Heart left ventricle (tissue), 16 donors: ENCODE measurements at regions of chr11 and their contacts with region 1.

Region 1: DNA sequence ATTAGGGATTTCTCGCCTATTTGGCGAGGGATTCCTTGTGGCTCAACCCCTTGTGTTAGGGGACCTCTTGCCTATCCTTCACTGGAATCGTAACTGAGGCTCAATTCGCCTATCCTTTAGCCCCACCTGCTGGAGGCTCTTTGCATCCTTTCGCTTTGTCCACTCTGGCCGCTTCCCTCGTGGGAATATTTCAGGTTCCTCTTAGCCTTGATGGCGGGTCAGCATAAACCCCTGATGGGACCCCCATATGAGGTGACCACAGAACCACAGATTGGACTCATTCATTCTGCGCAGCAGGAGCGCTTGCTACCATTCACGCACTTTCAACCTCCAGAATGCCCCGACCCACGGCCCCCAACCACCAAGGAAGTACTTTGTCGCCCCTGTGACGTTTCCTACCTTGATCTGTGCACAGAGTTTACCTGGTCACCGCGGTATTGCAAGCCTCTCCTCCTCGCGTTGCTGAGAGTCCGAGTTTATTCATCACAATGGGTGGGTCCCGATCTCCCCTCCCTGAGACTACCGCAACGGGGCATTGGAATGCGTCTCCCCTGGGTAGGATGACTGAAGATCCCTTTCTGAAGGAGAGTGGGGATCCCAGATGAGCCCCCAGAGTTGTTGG is at the start of gene OR52N2:
- DNase-seq: peak in 4 of 5 donors; percentile 63 to 70 (median 66)
- ATAC-seq: peak in 3 of 4 donors; percentile 88 to 92 (median 90)
- H3K4me3 ChIP-seq: peak within 1 kb of the TSS; percentile 17 to 66 (median 54)
- H3K27ac ChIP-seq: no peak within 1 kb of the TSS
- H3K4me1 ChIP-seq: peaks cover 0 to 12% (median 0%) of the 10 kb centered on the region in 12 donors
- H3K27me3 ChIP-seq: peaks cover 0 to 2% (median 0%) of the 10 kb centered on the region in 9 donors
- CTCF ChIP-seq: peak; percentile 66 to 89 (median 84)
- POLR2A ChIP-seq: no peak
- total RNA-seq, gene OR52N2: not detected

Region 2: GRCh38 chr11:4636962-4637661 is 1171.5 kb before region 1 on chr11 and contains the start of gene OR51D1:
- intact Hi-C with region 1: loop called in 1 of 10 experiments (anchors 10 kb)
- DNase-seq: peak; percentile 70 to 84 (median 75)
- ATAC-seq: peak; percentile 88 to 98 (median 94)
- H3K4me3 ChIP-seq: peak within 1 kb of the TSS in 10 of 12 donors; percentile 28 to 52 (median 38)
- H3K27ac ChIP-seq: peak within 1 kb of the TSS in 3 of 12 donors; percentile 27 to 39 (median 37)
- H3K4me1 ChIP-seq: peaks cover 0 to 17% (median 7%) of the 10 kb centered on the region in 12 donors
- H3K27me3 ChIP-seq: peaks cover 0 to 3% (median 0%) of the 10 kb centered on the region in 9 donors
- CTCF ChIP-seq: peak; percentile 84 to 97 (median 92)
- POLR2A ChIP-seq: no peak
- total RNA-seq, gene OR51D1: not detected

Region 3: DNA sequence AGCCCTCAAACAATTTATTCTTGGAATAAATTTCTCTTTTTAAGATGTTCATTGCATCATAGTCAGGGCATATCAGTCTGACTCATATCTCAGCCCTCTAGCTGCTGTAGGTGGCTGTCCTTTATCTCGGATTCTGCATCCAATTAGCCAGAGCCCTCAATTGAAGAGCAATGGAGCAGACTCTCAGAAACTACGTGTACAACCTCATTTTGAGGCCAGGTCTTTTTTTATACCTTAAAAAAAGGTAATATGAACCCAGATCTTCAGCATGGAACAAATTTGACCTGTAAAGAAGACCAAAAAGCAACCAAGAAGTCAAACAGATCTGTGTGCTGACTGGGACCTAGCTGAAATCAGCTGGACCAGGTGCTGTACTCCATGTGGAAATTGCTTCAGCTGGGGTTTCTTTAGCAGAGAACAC is 679.1 kb before region 1 on chr11:
- intact Hi-C with region 1: loop called in 8 of 10 experiments (anchors 1 to 10 kb)
- DNase-seq: no peak
- ATAC-seq: no peak
- H3K4me3 ChIP-seq: no peak overlapping the region
- H3K27ac ChIP-seq: no peak overlapping the region
- H3K4me1 ChIP-seq: no peaks in the 10 kb centered on the region
- H3K27me3 ChIP-seq: no peaks in the 10 kb centered on the region
- CTCF ChIP-seq: no peak
- POLR2A ChIP-seq: no peak

Region 4: GRCh38 chr11:5452712-5453111 is 355.9 kb before region 1 on chr11:
- intact Hi-C with region 1: no loop called
- DNase-seq: no peak
- ATAC-seq: no peak
- H3K4me3 ChIP-seq: no peak overlapping the region
- H3K27ac ChIP-seq: no peak overlapping the region
- H3K4me1 ChIP-seq: no peaks in the 10 kb centered on the region
- H3K27me3 ChIP-seq: no peaks in the 10 kb centered on the region
- CTCF ChIP-seq: no peak
- POLR2A ChIP-seq: no peak

Region 5: DNA sequence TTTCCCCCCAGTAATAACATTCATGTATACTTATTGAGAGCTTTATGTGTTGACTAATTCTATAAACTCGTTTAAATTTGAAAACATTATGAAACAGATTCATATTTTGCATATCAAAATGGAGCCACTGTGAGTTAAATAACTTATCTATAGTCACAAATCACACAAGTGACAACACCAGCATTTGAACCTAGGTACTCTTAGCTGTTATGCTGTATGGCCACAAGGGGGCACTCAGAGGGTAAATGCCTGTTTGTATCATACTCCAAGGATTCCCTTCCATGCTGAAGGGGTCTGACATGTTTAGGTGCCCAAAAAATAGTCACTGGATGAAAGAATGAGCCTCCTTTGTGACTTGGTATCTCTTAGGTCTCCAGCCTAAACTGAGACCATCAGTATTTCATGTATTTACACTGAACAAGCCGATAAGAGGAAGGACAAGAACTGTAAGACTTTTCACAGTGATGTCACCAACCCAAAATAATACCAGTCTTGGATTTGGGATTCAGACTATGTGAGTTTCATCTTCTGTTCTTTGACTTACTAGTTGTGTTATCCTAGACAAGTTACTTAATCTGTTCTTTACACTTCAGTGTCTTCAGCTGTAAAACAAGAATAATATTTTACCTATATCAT is 332.3 kb before region 1 on chr11:
- intact Hi-C with region 1: loop called (anchors 1 to 5 kb)
- DNase-seq: peak in 3 of 5 donors; percentile 29 to 39 (median 37)
- ATAC-seq: peak in 1 of 4 donors; percentile 66
- H3K4me3 ChIP-seq: no peak overlapping the region
- H3K27ac ChIP-seq: no peak overlapping the region
- H3K4me1 ChIP-seq: no peaks in the 10 kb centered on the region
- H3K27me3 ChIP-seq: peaks cover 0 to 6% (median 0%) of the 10 kb centered on the region in 9 donors
- CTCF ChIP-seq: peak; percentile 68 to 89 (median 80)
- POLR2A ChIP-seq: no peak

Region 6: GRCh38 chr11:5564259-5565019 is 244.2 kb before region 1 on chr11:
- intact Hi-C with region 1: no loop called
- DNase-seq: no peak
- ATAC-seq: no peak
- H3K4me3 ChIP-seq: no peak overlapping the region
- H3K27ac ChIP-seq: no peak overlapping the region
- H3K4me1 ChIP-seq: no peaks in the 10 kb centered on the region
- H3K27me3 ChIP-seq: no peaks in the 10 kb centered on the region
- CTCF ChIP-seq: no peak
- POLR2A ChIP-seq: no peak

Region 7: DNA sequence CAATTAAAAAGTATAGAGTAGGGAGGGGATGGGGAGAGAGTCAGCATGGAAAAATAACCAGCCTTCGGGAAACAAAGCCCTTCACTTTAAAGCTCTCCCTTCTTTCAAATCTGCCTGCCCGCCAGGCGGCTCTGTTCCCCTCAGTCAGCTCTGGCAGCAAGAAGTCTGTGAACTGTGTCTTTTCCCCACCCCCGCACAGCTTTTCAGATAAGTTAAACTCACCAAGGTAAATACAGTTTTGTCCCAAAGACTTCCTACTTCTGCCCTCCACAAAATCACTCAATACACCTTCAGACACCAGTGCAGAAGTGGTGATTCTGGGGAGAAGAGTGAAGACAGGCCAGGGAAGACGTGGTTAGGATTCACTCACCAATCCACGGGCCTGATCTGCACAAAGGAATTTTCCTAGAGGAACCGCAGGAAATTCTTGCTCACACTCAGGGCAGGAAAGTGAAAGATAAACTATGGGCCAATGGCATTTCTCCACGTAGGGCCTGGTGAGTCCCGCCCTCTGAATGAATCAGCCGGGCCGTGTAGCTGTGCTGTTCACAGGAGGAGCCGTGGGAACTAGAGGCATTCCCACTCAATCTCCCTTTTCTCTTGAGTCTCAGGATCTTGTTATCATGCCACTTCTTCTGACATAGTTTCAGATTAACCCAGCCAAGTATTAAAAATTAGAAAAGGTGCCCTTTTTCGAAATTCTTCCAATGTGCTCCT is 123.8 kb before region 1 on chr11 and contains the start of gene TRIM5:
- intact Hi-C with region 1: loop called in 1 of 10 experiments (anchors 1 kb)
- DNase-seq: peak; percentile 87 to 91 (median 89)
- ATAC-seq: peak; percentile 97 to 99 (median 98)
- H3K4me3 ChIP-seq: peak within 1 kb of the TSS; percentile 25 to 68 (median 52)
- H3K27ac ChIP-seq: peak within 1 kb of the TSS; percentile 74 to 96 (median 86)
- H3K4me1 ChIP-seq: peaks cover 0 to 31% (median 17%) of the 10 kb centered on the region in 12 donors
- H3K27me3 ChIP-seq: no peaks in the 10 kb centered on the region
- CTCF ChIP-seq: peak; percentile 35 to 74 (median 54)
- POLR2A ChIP-seq: peak in 1 of 2 donors; percentile 88
- total RNA-seq, gene TRIM5: 7.5 to 15.9 (median 8.9) TPM

Region 8: GRCh38 chr11:5712507-5712906 is 96.1 kb before region 1 on chr11:
- intact Hi-C with region 1: no loop called
- DNase-seq: no peak
- ATAC-seq: no peak
- H3K4me3 ChIP-seq: no peak overlapping the region
- H3K27ac ChIP-seq: no peak overlapping the region
- H3K4me1 ChIP-seq: no peaks in the 10 kb centered on the region
- H3K27me3 ChIP-seq: no peaks in the 10 kb centered on the region
- CTCF ChIP-seq: peak in 10 of 12 donors; percentile 12 to 35 (median 21)
- POLR2A ChIP-seq: no peak